ENCODE measurements at regions of chr5 and their contacts with region 1.

Region 1: GRCh38 chr5:62354028-62354874 is 48.2 kb downstream of the KIF2A start:
- DNase-seq: no peak
- H3K4me3 ChIP-seq: no peak overlapping the region
- H3K27ac ChIP-seq: no peak overlapping the region
- H3K4me1 ChIP-seq: no peaks in the 10 kb centered on the region
- H3K27me3 ChIP-seq: no peaks in the 10 kb centered on the region
- CTCF ChIP-seq: peak; percentile 58 to 69 (median 64)
- EP300 ChIP-seq: no peak
- POLR2A ChIP-seq: no peak

Region 2: DNA sequence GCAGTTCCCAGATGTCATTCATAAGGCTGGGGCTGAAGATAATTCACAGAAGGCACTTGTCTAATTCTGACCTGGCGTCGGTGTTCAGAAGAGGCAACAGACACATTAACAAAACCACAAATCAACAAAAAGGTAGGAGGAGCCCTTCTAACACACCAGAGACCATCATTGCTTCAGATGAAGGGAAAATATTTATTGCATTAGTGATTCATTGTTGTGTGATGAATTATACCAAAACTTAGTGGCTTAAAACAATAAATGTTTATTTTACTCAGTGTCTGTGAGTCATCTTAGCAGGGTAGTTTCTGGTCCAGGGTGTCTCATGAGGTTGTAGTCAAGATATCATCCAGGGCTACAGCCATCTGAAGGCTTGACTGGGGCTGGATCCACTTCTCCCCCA is 139.6 kb before region 1 on chr5:
- in situ Hi-C with region 1: loop called in 1 of 4 experiments (anchors 10 kb)
- intact Hi-C with region 1: loop called (anchors 10 kb)
- DNase-seq: no peak
- H3K4me3 ChIP-seq: no peak overlapping the region
- H3K27ac ChIP-seq: no peak overlapping the region
- H3K4me1 ChIP-seq: no peaks in the 10 kb centered on the region
- H3K27me3 ChIP-seq: no peaks in the 10 kb centered on the region
- CTCF ChIP-seq: no peak
- EP300 ChIP-seq: no peak
- POLR2A ChIP-seq: no peak

Region 3: DNA sequence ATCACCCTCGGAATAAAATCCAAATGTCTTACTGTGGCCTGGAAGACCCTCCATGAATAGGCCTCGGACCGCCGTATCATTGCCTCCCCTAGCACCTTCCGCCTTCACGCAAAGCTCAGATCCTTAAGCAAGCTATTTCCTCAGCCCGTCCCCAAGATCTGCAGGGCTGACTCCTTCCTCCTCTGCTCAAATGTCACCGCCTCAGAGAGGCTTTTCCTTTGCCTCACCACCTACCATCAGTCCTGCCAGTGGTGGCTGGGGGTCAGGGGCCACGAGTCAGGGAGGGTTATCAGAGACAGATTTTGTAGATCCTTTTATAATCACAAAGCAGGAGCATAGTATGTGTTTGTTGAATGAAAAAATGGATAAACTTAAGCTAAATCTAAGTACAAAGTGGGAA is 122.7 kb before region 1 on chr5:
- in situ Hi-C with region 1: loop called in 1 of 4 experiments (anchors 10 kb)
- intact Hi-C with region 1: no loop called
- DNase-seq: no peak
- H3K4me3 ChIP-seq: no peak overlapping the region
- H3K27ac ChIP-seq: no peak overlapping the region
- H3K4me1 ChIP-seq: peaks cover 0 to 2% (median 0%) of the 10 kb centered on the region in 4 donors
- H3K27me3 ChIP-seq: no peaks in the 10 kb centered on the region
- CTCF ChIP-seq: no peak
- EP300 ChIP-seq: no peak
- POLR2A ChIP-seq: no peak